AG04449 (cell line): ENCODE measurements at regions of chr17 and their contacts with region 1.

Region 1: DNA sequence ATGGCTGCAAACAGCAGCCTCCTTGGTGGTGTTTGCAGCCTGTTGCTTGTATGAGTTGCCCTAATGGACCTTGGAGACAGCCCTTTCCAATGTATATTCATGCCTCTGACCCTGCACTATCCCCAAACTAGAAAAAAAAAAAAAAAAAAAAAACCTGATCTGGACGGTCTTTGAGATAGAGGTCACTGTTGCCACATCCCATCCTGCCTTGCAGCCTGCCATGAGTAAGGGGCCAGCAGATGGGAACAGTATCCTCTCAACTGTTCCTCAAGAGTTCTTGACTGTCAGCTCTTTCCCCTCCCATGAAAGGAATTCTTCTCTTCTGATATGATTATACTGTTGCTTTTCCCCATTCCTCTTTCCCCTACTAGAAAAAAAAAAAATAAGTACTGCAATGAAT is 152.4 kb downstream of the SSH2 start:
- DNase-seq: no peak
- H3K4me3 ChIP-seq: no peak overlapping the region
- CTCF ChIP-seq: no peak

Region 2: DNA sequence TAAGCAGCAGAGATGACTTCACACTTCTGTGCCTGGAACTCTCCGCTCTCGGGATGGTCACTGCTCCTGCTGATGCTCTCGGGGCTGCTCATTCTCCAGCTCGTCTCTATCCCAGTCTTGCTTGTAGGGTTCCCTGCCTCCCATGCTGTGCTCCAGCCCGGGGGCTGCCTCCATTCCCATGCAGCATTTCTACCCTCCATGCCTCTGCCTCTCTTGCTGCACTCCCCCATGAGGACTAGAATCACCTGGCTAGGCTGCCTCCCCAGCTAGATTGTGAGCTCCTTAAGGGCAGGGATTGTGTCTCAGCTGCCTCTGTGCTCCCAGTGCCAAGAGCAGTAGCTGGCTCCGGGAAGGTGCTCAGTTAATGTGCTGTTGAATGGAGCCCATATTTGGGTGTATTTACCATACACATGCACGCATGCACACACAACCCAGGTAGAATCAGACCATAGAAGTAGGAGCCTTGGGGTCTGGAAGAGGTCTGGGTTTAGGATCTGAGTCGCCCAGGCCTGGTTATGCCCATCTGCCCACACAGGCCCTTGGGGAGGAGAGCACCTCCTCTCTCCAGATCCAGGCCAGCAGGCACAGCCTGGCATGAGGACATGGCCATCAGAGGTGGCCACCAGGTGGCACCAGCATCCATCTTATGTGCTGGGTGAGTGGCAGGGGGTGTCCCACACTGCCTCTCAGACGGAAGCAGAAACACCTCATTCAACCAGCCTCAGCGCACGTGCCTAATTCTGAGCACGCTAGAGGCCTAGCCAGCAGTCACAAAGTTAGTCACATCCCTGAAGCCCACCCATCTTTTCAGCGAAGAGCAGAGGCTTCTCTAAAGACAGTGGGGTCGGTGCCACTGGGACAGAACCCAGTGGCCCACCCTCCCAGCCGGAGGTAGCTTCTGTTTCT is 197.5 kb before region 1 on chr17:
- CTCF ChIA-PET with region 1: interaction called, 49 read pairs
- POLR2A ChIA-PET with region 1: no interaction called
- DNase-seq: no peak
- H3K4me3 ChIP-seq: no peak overlapping the region
- CTCF ChIP-seq: peak; percentile 95

Region 3: DNA sequence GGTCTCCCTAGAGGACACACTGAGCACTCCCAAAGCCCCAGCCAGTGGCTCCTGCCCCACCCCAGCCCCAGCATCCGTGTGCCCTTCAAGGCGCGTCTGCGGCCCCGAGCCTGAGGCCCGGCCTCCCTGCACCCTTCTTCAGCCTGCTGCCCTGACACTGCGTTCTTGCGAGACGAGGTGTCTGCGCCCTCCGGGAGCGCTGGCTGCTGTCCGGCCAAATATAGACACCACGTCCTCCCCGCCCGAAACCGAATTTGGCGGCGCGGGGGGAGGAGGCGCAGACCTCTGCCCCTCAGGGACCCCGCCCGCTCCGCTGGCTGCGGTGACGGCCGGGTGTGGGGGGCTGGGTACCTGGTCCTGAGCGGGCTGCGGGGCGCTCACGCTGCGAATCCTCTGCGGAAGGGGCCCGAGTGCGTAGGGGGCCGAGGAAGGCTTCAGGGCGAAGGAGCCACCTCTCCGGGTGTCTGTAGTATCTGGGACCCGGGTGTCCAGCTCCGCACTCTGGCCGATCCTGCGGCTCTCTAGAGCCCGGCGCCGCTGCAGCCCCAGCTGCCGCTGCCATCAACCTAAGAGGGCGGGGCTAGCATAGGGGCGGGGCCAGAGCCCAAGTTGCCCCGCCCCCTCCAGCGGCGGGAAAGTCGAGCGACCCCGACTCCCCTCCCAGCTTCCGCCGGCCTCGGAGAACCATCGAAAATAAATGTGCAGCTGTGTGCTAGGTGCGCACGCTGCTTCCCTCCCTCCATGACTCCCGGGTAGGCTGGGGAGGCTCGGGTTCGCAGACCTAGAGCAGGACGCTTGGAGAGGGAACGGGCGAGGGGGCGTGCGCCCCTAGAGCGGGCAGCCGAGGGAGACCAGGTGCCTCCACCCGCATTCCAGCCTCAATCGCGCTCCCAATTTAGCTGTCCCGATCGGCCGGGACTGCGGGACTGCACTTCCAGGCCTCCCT is 155.1 kb before region 1 on chr17 and contains the start of gene CORO6:
- CTCF ChIA-PET with region 1: interaction called, 107 read pairs
- POLR2A ChIA-PET with region 1: no interaction called
- DNase-seq: no peak
- H3K4me3 ChIP-seq: peak within 1 kb of the TSS; percentile 79
- CTCF ChIP-seq: no peak

Region 4: GRCh38 chr17:29645515-29646051 is 132.1 kb before region 1 on chr17:
- CTCF ChIA-PET with region 1: interaction called, 170 read pairs
- POLR2A ChIA-PET with region 1: no interaction called
- DNase-seq: peak; percentile 57
- H3K4me3 ChIP-seq: no peak overlapping the region
- CTCF ChIP-seq: no peak

Region 5: DNA sequence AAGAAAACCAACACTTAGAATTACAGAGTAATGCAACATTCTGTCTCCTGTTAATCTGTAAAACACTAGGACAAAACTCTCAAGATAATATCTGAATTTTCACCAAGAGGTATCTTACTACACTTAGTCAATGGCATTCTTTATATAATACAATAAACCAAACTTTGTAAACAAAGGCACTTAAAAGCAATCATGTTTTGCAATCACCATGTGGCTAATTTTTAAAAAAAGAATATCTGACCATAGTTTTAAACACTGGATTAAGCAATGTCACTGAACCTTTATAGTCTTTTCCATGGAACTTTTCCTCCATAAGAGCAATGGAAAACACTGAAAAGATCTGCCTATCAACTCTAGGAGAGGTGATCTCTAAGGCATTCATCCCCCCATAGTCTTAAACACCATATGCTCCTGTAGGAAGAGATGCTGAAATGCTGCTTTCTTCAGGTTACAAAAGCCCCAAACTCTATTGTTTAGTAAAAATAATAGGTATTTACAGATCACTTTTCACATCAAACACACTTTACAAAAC is 10.8 kb before region 1 on chr17:
- CTCF ChIA-PET with region 1: interaction called, 51 read pairs
- POLR2A ChIA-PET with region 1: no interaction called
- DNase-seq: no peak
- H3K4me3 ChIP-seq: no peak overlapping the region
- CTCF ChIP-seq: no peak

Region 6: DNA sequence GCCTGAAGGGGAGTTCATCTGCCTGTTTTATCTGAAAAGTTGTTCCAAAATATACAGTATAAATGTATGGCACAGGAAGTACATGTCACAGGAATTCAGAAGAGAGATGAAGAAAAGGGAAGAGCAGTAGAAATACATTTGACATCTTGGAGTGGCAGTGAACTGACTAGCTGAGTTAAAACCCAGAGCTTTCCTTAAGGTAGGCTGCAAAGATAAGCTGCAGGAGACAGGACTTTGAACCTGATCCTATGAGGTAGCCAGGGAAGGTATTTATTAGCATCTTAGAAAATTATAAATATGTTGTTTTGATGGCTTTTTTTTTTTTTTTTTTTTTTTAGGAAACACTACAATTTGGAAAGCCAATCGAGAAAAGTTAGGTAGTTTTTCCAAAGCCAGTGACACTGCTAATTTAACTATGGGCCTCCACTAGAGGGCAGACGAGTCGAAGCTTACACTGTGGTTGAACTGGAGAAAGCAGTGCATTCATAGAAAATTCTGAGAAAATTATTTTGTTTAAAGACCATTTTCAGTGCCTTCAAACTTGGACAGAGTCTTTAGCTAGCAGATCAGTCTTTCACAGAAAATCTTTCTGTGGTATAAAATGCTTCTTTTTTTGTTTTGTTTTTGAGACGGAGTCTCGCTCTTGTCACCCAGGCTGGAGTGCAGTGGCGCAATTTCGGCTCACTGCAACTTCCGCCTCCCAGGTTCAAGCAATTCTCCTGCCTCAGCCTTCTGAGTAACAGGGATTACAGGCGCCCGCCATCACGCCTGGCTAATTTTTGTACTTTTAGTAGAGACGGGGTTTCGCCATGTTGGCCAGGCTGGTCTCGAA is 30.1 kb after region 1 on chr17:
- CTCF ChIA-PET with region 1: interaction called, 38 read pairs
- POLR2A ChIA-PET with region 1: no interaction called
- DNase-seq: no peak
- H3K4me3 ChIP-seq: no peak overlapping the region
- CTCF ChIP-seq: peak; percentile 67